Ascending aorta (tissue), 2 donors: ENCODE measurements at regions of chr4 and their contacts with region 1.

Region 1: GRCh38 chr4:1870578-1871443 is at the start of gene NSD2:
- DNase-seq: peak; percentile 35 to 93
- H3K4me3 ChIP-seq: peak within 1 kb of the TSS; percentile 99 to 100
- H3K27ac ChIP-seq: peak within 1 kb of the TSS; percentile 98 to 99
- H3K4me1 ChIP-seq: peaks cover 4 to 5% of the 10 kb centered on the region in 2 donors
- H3K27me3 ChIP-seq: no peaks in the 10 kb centered on the region
- CTCF ChIP-seq: no peak
- total RNA-seq, gene NSD2: 19.9 TPM

Region 2: GRCh38 chr4:1579901-1580691 is 290.7 kb before region 1 on chr4:
- intact Hi-C with region 1: loop called (anchors 5 kb)
- DNase-seq: peak; percentile 72 to 95
- H3K4me3 ChIP-seq: peak overlapping the region; percentile 58 to 95
- H3K27ac ChIP-seq: peak overlapping the region; percentile 63 to 74
- H3K4me1 ChIP-seq: peaks cover 4% of the 10 kb centered on the region in 2 donors
- H3K27me3 ChIP-seq: no peaks in the 10 kb centered on the region
- CTCF ChIP-seq: no peak

Region 3: DNA sequence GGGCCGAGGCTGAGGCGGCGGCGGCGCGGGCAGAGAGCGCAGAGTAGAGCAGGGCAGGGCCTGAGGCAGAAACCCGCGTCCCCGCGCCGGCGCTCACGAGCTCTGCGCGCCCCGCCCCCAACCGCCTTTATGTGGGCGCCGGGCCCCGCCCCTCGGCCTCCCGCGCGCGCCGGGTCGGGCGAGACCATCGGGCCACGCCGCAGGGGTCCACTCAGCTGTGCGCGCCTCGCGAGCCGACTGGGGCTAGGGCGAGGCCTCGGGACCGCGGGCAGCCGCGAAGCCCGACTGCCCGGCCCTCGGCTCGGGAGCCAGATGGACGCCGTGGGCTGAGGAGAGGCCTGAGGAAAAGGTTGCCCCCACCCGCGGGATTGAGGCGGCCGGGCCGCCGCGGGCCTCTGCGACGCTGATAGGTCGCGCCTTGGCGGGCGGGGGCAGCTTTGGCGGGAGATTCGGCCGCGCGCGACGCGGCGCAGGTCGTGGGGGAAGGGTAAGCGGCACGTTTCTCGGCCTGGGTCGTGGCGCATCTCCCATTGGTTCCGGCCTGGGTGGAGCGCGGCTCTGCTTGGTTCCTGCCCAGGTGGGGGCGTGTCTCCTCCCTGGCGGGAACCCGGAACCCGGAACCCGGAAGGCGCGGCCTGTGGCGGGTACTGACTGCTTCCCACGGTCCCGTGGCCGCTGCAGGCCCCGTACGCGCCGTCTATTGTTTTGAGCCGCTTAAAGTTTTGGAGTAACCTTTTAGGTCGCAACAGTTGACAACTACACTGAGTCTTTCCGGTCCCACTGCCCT is 158.4 kb before region 1 on chr4 and contains the start of gene SLBP:
- intact Hi-C with region 1: loop called (anchors 2 kb)
- DNase-seq: peak; percentile 86 to 98
- H3K4me3 ChIP-seq: peak within 1 kb of the TSS; percentile 93 to 94
- H3K27ac ChIP-seq: peak within 1 kb of the TSS; percentile 99 to 100
- H3K4me1 ChIP-seq: peaks cover 0 to 10% of the 10 kb centered on the region in 2 donors
- H3K27me3 ChIP-seq: no peaks in the 10 kb centered on the region
- CTCF ChIP-seq: no peak
- total RNA-seq, gene SLBP: 218 TPM

Region 4: GRCh38 chr4:1721004-1721665 is 149.7 kb before region 1 on chr4 and contains the starts of genes TACC3 and TMEM129:
- intact Hi-C with region 1: loop called (anchors 2 kb)
- DNase-seq: peak; percentile 84 to 95
- H3K4me3 ChIP-seq: peak within 1 kb of the TSS; percentile 81 to 87
- H3K27ac ChIP-seq: peak within 1 kb of the TSS; percentile 87 to 90
- H3K4me1 ChIP-seq: peaks cover 12 to 18% of the 10 kb centered on the region in 2 donors
- H3K27me3 ChIP-seq: no peaks in the 10 kb centered on the region
- CTCF ChIP-seq: no peak
- total RNA-seq, gene TACC3: 2.7 TPM
- total RNA-seq, gene TMEM129: 192 TPM

Region 5: DNA sequence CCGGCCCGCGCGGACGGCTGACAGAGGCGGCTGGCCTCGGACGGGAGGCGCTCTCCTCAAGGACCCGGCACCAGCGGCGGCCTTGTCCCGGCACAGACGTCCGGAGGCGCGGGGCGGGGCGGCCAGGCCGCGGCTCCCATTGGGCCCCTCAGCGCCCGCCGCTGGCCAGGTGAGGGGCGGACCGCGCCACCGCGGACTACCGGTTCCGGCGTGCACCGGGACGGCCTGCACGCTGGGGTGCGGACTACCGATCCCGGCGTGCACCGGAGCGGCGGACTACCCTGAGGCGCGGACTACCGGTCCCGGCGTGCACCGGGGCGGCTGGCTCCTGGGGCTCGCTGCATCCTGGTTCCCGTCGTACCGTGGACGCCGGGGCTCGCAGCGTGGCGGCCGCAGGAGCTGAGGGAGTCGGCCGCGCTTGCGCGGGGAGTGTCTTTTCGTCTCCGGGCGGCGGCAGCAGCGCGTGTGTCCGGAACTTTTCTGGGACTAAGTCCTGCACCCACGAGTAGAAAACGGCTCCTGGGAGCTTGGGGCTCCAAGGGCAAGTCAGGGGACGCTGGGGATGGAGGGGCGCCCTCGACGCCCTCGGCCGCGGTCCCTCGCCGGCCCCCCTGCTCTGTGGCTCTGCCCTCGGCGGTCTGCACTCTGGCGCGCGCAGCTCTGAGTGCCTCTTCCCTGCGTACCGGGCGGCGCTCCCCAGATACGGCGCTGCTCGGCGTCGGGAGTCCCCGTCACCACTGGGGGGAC is 14.6 kb before region 1 on chr4 and contains the start of gene LETM1:
- intact Hi-C with region 1: loop called (anchors 1 kb)
- DNase-seq: peak; percentile 86 to 97
- H3K4me3 ChIP-seq: peak within 1 kb of the TSS; percentile 85 to 86
- H3K27ac ChIP-seq: peak within 1 kb of the TSS; percentile 78 to 82
- H3K4me1 ChIP-seq: peaks cover 0 to 10% of the 10 kb centered on the region in 2 donors
- H3K27me3 ChIP-seq: no peaks in the 10 kb centered on the region
- CTCF ChIP-seq: peak in 1 of 3 experiments; percentile 28
- total RNA-seq, gene LETM1: 37.7 TPM

Region 6: GRCh38 chr4:2008875-2009703 is 138.3 kb after region 1 on chr4 and contains the start of gene NELFA:
- intact Hi-C with region 1: loop called (anchors 1 kb)
- DNase-seq: peak; percentile 63 to 96
- H3K4me3 ChIP-seq: peak within 1 kb of the TSS; percentile 84 to 98
- H3K27ac ChIP-seq: peak within 1 kb of the TSS; percentile 96 to 98
- H3K4me1 ChIP-seq: peaks cover 0 to 2% of the 10 kb centered on the region in 2 donors
- H3K27me3 ChIP-seq: no peaks in the 10 kb centered on the region
- CTCF ChIP-seq: peak in 2 of 3 experiments; percentile 44 to 54
- total RNA-seq, gene NELFA: 11.9 TPM

Region 7: GRCh38 chr4:2412885-2413716 is 542.3 kb after region 1 on chr4:
- intact Hi-C with region 1: loop called (anchors 5 kb)
- DNase-seq: peak; percentile 68 to 92
- H3K4me3 ChIP-seq: peak overlapping the region; percentile 24 to 47
- H3K27ac ChIP-seq: peak overlapping the region; percentile 66 to 68
- H3K4me1 ChIP-seq: peaks cover 5 to 21% of the 10 kb centered on the region in 2 donors
- H3K27me3 ChIP-seq: no peaks in the 10 kb centered on the region
- CTCF ChIP-seq: peak; percentile 39 to 60 (median 45)